ENCODE measurements at regions of chr17 and their contacts with region 1.

Region 1: GRCh38 chr17:69103557-69104233 is 38.0 kb downstream of the ABCA6 start:
- DNase-seq: no peak
- ATAC-seq: no peak
- H3K4me3 ChIP-seq: no peak overlapping the region
- H3K27ac ChIP-seq: no peak overlapping the region
- H3K4me1 ChIP-seq: no peaks in the 10 kb centered on the region
- H3K27me3 ChIP-seq: no peaks in the 10 kb centered on the region
- CTCF ChIP-seq: no peak
- POLR2A ChIP-seq: no peak
- RAD21 ChIP-seq: no peak

Region 2: DNA sequence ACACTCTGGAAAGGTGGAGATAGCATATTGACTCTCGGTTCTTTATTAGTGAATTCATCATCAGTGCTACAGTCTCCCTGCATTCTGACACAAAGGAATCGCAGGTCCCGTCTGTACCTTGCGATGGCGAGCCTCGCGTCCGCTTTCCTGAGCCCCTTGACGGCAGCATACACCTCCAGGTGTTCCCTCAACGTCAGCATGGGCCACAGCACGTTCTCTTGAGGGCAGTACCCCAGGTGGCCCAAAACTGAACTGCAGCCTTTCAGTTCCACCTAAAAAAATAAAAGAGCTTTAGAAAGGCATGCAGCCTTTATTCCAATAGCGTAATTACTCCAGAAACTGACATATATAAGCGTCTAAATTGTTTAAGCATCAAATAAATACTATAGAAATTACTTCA is 18.8 kb before region 1 on chr17:
- CTCF ChIA-PET with region 1: interaction called, 14 read pairs
- POLR2A ChIA-PET with region 1: no interaction called
- RAD21 ChIA-PET with region 1: no interaction called
- intact Hi-C with region 1: no loop called
- DNase-seq: peak; percentile 81
- ATAC-seq: peak; percentile 100
- H3K4me3 ChIP-seq: no peak overlapping the region
- H3K27ac ChIP-seq: no peak overlapping the region
- H3K4me1 ChIP-seq: no peaks in the 10 kb centered on the region; a peak in 1 of 4 replicates
- H3K27me3 ChIP-seq: no peaks in the 10 kb centered on the region
- CTCF ChIP-seq: peak; percentile 47 to 85 (median 82); a peak in 5 of 6 replicates
- POLR2A ChIP-seq: no peak
- RAD21 ChIP-seq: peak; percentile 41; the same call in 1 of the 2 replicates

Region 3: DNA sequence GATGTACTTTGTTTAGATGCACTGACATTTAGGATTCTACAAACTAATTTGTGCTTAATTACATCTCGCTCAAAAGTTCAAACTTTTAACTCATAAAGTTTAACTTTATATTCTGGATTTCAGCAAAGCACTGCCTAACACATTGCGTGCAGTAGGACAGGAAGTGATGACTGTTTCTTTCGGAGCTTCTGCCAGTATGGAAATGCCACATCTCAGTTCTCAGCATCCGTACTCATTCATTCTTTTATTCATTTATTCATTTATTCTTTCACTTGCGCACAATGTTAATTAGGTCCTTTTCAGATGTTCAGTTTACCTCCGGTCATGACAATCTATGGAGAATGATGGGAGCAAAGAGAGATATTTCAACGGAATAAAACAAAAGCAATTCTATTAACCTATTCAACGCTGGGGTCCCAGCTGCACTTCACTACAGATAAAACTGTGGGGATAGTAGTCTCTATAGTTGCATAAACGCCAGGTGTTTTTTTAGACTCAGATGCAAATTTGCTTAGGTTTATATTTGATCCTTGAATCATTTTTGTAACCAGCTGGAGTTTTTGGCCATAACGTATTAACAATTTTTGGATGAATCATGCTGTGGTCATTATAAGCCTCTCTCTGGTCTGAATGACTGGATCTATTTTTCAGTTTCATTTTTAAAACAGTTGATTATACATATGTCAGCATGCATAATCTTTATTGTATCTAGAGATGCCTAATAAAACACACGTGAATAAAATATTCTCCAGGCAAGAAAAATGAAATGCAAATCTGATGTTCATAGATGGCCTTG is 1209.6 kb after region 1 on chr17:
- CTCF ChIA-PET with region 1: no interaction called
- POLR2A ChIA-PET with region 1: no interaction called
- RAD21 ChIA-PET with region 1: no interaction called
- intact Hi-C with region 1: no loop called
- DNase-seq: no peak
- ATAC-seq: no peak
- H3K4me3 ChIP-seq: no peak overlapping the region
- H3K27ac ChIP-seq: no peak overlapping the region
- H3K4me1 ChIP-seq: no peaks in the 10 kb centered on the region
- H3K27me3 ChIP-seq: no peaks in the 10 kb centered on the region
- CTCF ChIP-seq: no peak
- POLR2A ChIP-seq: no peak
- RAD21 ChIP-seq: no peak